AG04449 (cell line): ENCODE measurements at regions of chr1 and their contacts with region 1.

Region 1: DNA sequence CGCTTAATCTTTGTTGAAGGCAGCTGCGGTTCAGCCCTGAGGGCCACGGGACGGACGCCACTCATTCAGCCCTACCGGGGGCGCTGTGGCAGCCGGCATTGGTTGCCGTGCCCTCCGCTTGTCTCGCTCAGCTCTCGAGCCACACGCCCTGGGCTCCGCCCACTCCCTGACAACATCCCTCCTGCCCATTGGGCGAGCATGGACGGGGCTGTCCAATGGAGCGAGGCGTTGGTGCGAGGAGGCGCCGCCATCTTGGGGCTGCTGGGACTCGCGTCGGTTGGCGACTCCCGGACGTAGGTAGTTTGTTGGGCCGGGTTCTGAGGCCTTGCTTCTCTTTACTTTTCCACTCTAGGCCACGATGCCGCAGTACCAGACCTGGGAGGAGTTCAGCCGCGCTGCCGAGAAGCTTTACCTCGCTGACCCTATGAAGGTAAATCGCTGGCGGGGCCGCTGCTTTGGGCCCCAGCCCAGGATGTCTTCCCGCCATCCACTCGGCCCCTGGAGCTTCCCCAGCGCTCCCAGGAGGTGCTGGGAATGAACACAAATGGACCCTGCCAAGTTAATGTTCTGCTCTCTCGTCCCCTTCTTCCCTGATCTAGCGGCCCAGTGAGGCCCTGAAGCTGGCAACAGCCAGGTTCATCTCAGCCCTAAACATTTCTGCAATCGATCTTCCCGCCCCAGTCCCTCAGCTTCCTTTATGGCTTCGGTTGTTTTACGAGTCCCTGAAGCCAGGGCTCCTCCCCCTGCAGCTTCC is at the start of gene SRP9:
- DNase-seq: peak; percentile 84
- H3K4me3 ChIP-seq: peak within 1 kb of the TSS; percentile 89
- CTCF ChIP-seq: peak; percentile 98

Region 2: GRCh38 chr1:225474986-225475820 is 302.6 kb before region 1 on chr1:
- CTCF ChIA-PET with region 1: interaction called, 332 read pairs
- POLR2A ChIA-PET with region 1: no interaction called
- DNase-seq: no peak
- H3K4me3 ChIP-seq: no peak overlapping the region; the same call in 1 of the 2 replicates
- CTCF ChIP-seq: peak; percentile 100

Region 3: DNA sequence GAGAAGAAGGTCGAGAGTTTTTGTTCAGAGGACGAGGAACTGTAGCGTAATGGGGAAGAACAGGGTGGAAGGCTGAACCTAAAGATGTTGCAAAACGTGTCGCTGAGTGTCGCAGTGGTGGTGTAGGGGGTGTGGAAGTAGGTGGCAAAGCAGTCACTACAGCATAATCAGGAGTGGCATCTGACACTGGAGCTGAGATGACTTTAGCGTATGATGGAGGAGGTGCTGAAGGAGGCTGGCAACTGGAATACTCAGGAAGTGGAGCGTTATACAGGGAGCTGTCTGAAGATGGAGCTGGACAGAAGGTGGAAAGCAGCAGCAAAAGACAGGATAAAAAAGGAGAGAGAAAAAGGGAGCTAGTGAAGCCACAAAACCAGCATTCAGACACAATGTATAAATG is 260.1 kb before region 1 on chr1:
- CTCF ChIA-PET with region 1: interaction called, 13 read pairs
- POLR2A ChIA-PET with region 1: no interaction called
- DNase-seq: no peak
- H3K4me3 ChIP-seq: no peak overlapping the region
- CTCF ChIP-seq: no peak

Region 4: DNA sequence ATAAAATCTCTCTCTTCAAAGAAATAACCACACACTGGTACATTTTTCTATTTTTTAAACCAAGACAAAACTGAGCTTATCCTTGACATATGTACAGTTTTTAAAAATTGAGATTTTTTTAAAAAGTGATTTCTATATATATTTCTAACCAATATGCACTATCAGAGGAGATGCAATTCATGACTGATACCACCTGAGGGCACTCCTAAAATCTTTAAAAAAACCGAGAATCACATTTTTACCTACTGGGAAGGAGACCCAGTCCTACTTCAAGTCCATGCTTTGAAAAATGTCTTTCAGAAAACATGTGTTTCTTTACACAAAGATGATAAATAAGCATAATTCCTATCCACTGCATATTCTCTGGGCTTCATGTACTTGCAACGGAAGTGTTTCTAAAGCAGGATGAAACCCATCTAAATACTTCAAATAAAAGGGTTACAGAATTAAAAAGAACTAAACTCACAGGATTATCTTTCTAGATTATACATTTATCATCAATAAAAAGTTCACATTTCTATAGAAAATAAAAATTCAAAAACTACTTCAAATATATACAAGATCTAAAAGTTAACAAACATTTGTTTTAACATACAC is 223.4 kb before region 1 on chr1:
- CTCF ChIA-PET with region 1: interaction called, 106 read pairs
- POLR2A ChIA-PET with region 1: no interaction called
- DNase-seq: no peak
- H3K4me3 ChIP-seq: no peak overlapping the region
- CTCF ChIP-seq: peak; percentile 14

Region 5: GRCh38 chr1:225652729-225653462 is 124.9 kb before region 1 on chr1 and contains the start of gene ENAH:
- CTCF ChIA-PET with region 1: interaction called, 19 read pairs
- POLR2A ChIA-PET with region 1: interaction called, 13 read pairs
- DNase-seq: no peak
- H3K4me3 ChIP-seq: peak within 1 kb of the TSS; percentile 85
- CTCF ChIP-seq: no peak

Region 6: DNA sequence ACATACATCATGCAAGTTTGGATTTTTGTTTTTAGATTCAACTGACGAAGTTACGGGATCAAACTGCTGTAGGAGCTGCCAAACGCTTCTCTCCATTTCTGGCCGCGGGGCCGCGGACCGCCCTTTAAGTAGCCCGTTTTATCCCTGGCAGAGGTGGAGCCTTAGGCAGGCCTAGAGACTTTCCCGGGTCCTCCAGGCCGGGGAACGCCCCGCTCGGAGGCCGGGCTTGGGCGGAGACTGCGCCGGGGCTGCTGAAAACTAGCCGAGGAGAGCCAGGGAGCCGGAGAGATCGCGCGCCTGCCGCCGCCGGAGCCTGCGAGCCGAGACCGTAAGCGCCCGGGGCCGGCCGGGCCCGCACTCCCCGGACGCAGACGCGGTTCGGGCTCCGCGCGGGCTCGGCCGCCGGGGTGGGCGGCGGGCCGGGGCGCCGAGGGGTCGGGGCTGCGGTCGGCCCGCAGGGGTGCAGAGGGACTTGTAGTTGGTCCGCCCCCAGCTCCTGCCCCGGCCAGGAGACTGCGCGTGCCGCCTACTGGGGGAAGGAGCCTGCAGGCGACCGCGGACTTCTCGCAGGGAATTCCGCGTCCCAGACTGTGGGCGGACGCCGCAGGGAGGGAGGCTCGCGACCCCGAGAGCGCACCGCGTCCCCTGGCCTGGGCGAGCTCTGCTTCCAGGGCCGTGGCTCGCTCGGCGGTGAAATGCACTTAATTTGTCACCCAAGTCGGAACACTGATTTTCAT is 32.2 kb after region 1 on chr1 and contains the start of gene EPHX1:
- CTCF ChIA-PET with region 1: interaction called, 14 read pairs
- POLR2A ChIA-PET with region 1: no interaction called
- DNase-seq: peak; percentile 29
- H3K4me3 ChIP-seq: peak within 1 kb of the TSS; percentile 75
- CTCF ChIP-seq: peak; percentile 77

Region 7: DNA sequence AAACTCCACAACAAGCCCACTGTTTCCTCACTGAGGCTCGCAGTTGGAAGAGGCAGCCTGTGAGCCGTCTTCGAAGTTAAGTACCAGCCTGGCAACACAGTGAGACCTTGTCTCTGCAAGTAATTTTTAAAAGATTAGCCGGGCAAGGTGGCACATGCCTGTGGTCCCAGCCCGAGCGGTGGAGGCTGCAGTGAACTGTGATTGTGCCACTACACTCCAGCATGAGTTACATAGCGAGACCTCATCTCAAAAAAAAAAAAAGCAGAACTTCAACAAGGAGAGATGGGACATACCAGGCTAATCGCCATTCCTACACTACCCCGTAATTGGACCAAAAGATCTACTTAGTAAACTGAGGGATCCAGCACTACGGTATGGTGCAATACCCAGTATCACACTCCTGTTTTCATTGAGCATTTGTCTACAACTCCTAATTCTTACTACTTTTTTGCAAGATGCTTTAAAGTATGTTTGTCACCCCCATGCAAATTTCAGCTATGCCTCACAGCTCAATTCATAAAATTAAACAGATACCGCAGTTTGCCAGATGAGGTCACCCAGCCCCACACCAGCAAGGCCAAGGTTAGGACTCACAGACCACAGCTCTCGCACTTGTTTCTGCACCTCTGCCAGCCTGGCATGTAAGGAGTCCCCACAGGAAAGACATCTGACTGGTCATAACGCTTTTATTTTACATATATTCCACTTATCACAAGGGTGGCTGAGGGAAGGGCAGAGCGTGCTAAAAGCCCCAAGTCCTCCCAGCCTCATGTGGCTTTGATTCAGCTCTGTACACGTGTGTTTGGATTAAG is 200.4 kb after region 1 on chr1:
- CTCF ChIA-PET with region 1: interaction called, 10 read pairs
- POLR2A ChIA-PET with region 1: no interaction called
- DNase-seq: no peak
- H3K4me3 ChIP-seq: no peak overlapping the region
- CTCF ChIP-seq: no peak